Naive thymus-derived CD4-positive, alpha-beta T cell (primary cell): ENCODE measurements at regions of chr1 and their contacts with region 1.

Region 1: DNA sequence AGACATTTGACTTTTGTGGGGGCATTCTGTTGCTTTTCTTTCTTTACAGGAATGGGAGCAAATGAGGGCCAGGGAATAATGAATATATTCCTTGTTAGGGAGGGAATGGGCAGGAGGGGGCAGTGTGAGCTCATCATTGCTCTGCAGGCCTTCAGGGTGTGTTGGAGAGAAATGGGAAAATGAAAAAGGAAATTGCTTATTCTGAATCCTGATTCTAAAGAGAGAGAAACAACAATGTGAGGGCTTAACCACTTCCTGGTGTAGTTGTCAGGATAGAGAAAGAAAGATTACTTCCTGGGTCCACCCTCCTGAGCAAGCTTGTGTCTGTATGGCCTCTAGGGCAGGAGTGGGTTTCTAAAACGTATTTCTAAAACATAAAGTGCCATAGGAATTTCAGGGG is 28.3 kb downstream of the VANGL2 start:
- DNase-seq: peak in 6 of 9 donors; percentile 35 to 61 (median 47)
- ATAC-seq: peak; percentile 54
- H3K4me3 ChIP-seq: no peak overlapping the region
- H3K4me3 Mint-ChIP-seq: peak overlapping the region; percentile 3 to 74 (median 62)
- H3K27ac ChIP-seq: peak overlapping the region; percentile 68
- H3K27ac Mint-ChIP-seq: peak overlapping the region; percentile 84 to 99 (median 91)
- H3K4me1 ChIP-seq: peaks cover 55 to 56% of the 10 kb centered on the region in 2 donors
- H3K4me1 Mint-ChIP-seq: peaks cover 32 to 77% (median 68%) of the 10 kb centered on the region in 7 donors
- H3K27me3 ChIP-seq: no peaks in the 10 kb centered on the region
- H3K27me3 Mint-ChIP-seq: no peaks in the 10 kb centered on the region

Region 2: DNA sequence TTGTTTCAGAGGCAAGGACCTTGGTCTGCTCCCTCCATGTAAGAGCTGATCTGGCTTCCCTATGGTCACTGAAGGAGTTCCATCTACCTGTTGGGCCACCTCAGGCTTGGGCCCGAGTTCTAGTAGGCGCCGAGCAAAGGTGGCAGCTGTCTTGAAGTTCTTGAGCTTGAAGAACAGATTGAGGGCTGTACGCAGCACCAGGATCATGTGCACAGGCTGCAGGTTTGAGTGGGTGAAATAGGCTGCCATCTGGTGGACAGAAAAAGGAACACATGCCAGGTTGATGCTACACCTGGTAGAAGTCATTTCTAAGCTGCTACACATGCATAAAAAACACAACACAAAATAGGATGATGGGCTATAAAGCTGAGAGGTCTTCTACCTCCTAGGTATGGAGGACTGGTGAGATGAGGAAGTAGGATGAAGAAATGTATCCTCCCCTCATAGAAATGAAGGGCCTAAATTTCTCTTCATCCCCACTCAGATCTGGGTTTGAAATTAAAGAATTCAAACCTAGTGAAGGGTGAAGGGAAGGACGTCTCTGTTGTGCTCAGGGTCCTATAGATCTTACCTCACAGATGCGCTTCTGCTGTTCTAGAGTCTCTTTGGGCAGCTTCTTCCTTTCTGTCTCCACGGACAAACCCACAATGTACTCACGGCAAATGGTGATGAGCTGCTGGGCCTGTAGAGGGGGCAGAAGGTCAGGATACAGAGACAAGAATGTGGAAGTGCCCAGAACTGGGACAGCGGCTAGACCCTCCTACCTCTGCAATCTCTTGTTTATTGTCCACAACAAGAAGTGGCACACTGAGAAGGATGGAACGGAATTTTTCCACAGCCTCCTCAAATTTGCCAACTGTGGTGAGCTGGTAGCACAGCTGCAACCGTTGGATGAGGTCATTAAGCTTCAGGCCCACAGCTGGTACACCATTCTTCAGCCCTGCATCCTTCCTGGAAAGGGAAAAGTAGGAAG is 137.1 kb before region 1 on chr1:
- CTCF ChIA-PET with region 1: no interaction called
- POLR2A ChIA-PET with region 1: no interaction called
- intact Hi-C with region 1: no loop called
- DNase-seq: peak; percentile 24 to 82 (median 74)
- ATAC-seq: peak; percentile 98
- H3K4me3 ChIP-seq: no peak overlapping the region
- H3K4me3 Mint-ChIP-seq: no peak overlapping the region
- H3K27ac ChIP-seq: no peak overlapping the region
- H3K27ac Mint-ChIP-seq: peak overlapping the region; percentile 0 to 88 (median 40)
- H3K4me1 ChIP-seq: peaks cover 0 to 3% of the 10 kb centered on the region in 2 donors
- H3K4me1 Mint-ChIP-seq: peaks cover 2 to 7% (median 6%) of the 10 kb centered on the region in 7 donors
- H3K27me3 ChIP-seq: no peaks in the 10 kb centered on the region
- H3K27me3 Mint-ChIP-seq: no peaks in the 10 kb centered on the region

Region 3: DNA sequence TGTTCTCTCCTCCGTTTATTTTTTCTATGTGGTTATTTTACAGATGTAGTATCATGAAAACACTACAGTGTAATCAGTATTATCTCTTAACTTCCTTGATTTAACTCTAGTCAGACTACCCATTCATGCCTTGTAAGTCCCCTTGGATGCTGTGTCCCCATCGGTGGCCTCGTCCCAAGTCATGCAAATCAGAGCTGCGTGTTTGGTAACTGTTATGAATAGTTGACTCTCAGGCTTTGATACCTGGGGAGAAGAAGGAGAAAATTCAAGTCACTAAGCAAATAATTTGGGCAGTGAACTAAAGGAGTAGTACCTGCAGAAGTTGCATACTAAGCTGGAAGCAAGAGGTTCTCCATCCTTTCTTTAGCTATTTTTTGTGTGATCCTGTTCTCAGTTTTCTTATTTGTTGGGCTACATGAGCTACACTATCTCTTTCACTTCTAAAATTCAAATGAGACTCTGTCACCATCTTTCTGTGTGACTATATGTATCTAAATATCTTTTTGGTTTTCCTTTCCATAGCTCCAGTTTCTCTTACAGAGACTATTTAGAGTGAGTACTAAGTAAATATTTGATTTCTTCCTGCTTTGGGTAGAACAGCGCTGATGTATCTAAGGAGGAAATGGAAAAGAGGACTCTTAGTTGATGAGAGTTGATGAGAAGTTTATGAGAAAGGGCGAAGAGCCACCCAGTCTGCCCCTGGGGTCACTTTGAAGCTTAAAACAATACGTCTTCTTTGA is 22.6 kb after region 1 on chr1:
- CTCF ChIA-PET with region 1: no interaction called
- POLR2A ChIA-PET with region 1: interaction called, 3 read pairs
- intact Hi-C with region 1: loop called in 1 of 2 experiments (anchors 2 kb)
- DNase-seq: no peak
- ATAC-seq: peak; percentile 16
- H3K4me3 ChIP-seq: no peak overlapping the region
- H3K4me3 Mint-ChIP-seq: peak overlapping the region in 9 of 10 donors; percentile 12 to 60 (median 51)
- H3K27ac ChIP-seq: no peak overlapping the region
- H3K27ac Mint-ChIP-seq: peak overlapping the region in 8 of 9 donors; percentile 4 to 86 (median 56)
- H3K4me1 ChIP-seq: peaks cover 21 to 33% of the 10 kb centered on the region in 2 donors
- H3K4me1 Mint-ChIP-seq: peaks cover 31 to 71% (median 68%) of the 10 kb centered on the region in 7 donors
- H3K27me3 ChIP-seq: no peaks in the 10 kb centered on the region
- H3K27me3 Mint-ChIP-seq: no peaks in the 10 kb centered on the region

Region 4: GRCh38 chr1:160474392-160475242 is 46.0 kb after region 1 on chr1:
- CTCF ChIA-PET with region 1: no interaction called
- POLR2A ChIA-PET with region 1: interaction called, 4 read pairs
- intact Hi-C with region 1: loop called (anchors 1 to 2 kb)
- DNase-seq: no peak
- ATAC-seq: no peak
- H3K4me3 ChIP-seq: no peak overlapping the region
- H3K4me3 Mint-ChIP-seq: no peak overlapping the region
- H3K27ac ChIP-seq: no peak overlapping the region
- H3K27ac Mint-ChIP-seq: no peak overlapping the region
- H3K4me1 ChIP-seq: peaks cover 17% of the 10 kb centered on the region in 2 donors
- H3K4me1 Mint-ChIP-seq: peaks cover 0 to 9% (median 1%) of the 10 kb centered on the region in 7 donors
- H3K27me3 ChIP-seq: no peaks in the 10 kb centered on the region
- H3K27me3 Mint-ChIP-seq: no peaks in the 10 kb centered on the region

Region 5: GRCh38 chr1:160494620-160495019 is 66.0 kb after region 1 on chr1:
- CTCF ChIA-PET with region 1: no interaction called
- POLR2A ChIA-PET with region 1: interaction called, 3 read pairs
- intact Hi-C with region 1: loop called in 1 of 2 experiments (anchors 2 kb)
- DNase-seq: no peak
- ATAC-seq: no peak
- H3K4me3 ChIP-seq: no peak overlapping the region
- H3K4me3 Mint-ChIP-seq: no peak overlapping the region
- H3K27ac ChIP-seq: no peak overlapping the region
- H3K27ac Mint-ChIP-seq: peak overlapping the region in 5 of 9 donors; percentile 14 to 66 (median 32)
- H3K4me1 ChIP-seq: peaks cover 0 to 3% of the 10 kb centered on the region in 2 donors
- H3K4me1 Mint-ChIP-seq: peaks cover 4 to 37% (median 21%) of the 10 kb centered on the region in 7 donors
- H3K27me3 ChIP-seq: no peaks in the 10 kb centered on the region
- H3K27me3 Mint-ChIP-seq: no peaks in the 10 kb centered on the region

Region 6: GRCh38 chr1:161962091-161962887 is 1533.6 kb after region 1 on chr1:
- CTCF ChIA-PET with region 1: no interaction called
- POLR2A ChIA-PET with region 1: no interaction called
- intact Hi-C with region 1: no loop called
- DNase-seq: peak in 3 of 9 donors; percentile 8 to 14 (median 10)
- ATAC-seq: peak; percentile 38
- H3K4me3 ChIP-seq: peak overlapping the region; percentile 27
- H3K4me3 Mint-ChIP-seq: peak overlapping the region; percentile 63 to 92 (median 85)
- H3K27ac ChIP-seq: peak overlapping the region; percentile 58
- H3K27ac Mint-ChIP-seq: peak overlapping the region; percentile 85 to 94 (median 88)
- H3K4me1 ChIP-seq: peaks cover 0 to 11% of the 10 kb centered on the region in 2 donors
- H3K4me1 Mint-ChIP-seq: peaks cover 6 to 47% (median 30%) of the 10 kb centered on the region in 7 donors
- H3K27me3 ChIP-seq: no peaks in the 10 kb centered on the region
- H3K27me3 Mint-ChIP-seq: no peaks in the 10 kb centered on the region